CD8-positive, alpha-beta T cell (primary cell): ENCODE measurements at regions of chr1 and their contacts with region 1.

Region 1: GRCh38 chr1:172443626-172444453 is at the start of gene PIGC:
- DNase-seq: peak; percentile 83 to 94 (median 93)
- ATAC-seq: peak; percentile 99
- H3K4me3 ChIP-seq: peak within 1 kb of the TSS; percentile 78 to 90
- H3K4me3 Mint-ChIP-seq: peak within 1 kb of the TSS; percentile 96
- H3K27ac ChIP-seq: peak within 1 kb of the TSS; percentile 71 to 83
- H3K27ac Mint-ChIP-seq: peak within 1 kb of the TSS; percentile 95
- H3K4me1 ChIP-seq: peaks cover 25% of the 10 kb centered on the region
- H3K4me1 Mint-ChIP-seq: peaks cover 45% of the 10 kb centered on the region
- H3K27me3 ChIP-seq: no peaks in the 10 kb centered on the region
- H3K27me3 Mint-ChIP-seq: no peaks in the 10 kb centered on the region
- CTCF ChIP-seq: peak; percentile 77
- total RNA-seq, gene PIGC: 22.1 to 23.2 TPM

Region 2: DNA sequence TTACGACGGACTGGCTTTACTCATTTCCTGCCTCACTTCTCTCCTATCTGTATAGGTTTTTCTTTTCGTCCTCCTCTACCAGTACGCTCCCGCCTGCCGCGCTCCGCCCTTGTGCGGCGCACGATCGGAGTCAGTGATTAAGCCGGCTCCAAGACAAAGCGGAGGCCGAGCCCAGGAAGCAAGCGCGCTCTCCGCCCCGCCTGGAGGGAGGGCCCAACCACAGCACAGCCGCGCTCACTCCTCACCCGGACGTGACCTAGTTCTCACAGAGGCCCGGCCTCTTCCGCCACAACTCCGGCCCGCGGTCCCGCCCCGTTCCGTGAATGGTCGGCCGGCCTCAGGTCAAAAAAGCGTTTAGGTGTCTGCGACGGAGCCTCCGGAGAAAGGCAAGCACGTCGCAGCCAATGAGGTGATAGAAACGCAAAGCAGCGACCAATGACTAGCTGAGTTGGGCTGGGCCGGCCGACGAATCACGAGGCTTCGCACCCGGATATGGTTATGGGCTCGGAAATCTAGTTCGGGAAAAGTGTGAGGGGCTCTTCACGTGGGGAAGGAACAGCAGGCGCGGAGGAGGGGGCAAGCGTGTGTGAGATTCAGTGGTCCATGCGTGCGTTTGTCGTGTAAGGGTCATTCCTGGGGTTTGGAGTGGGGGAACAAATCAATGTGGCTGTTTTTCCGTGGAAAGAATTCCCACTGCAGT is 662.5 kb before region 1 on chr1 and contains the start of gene METTL13:
- CTCF ChIA-PET with region 1: no interaction called
- POLR2A ChIA-PET with region 1: no interaction called
- intact Hi-C with region 1: loop called (anchors 5 to 10 kb)
- DNase-seq: peak; percentile 96 to 99 (median 98)
- ATAC-seq: peak; percentile 90
- H3K4me3 ChIP-seq: peak within 1 kb of the TSS; percentile 89 to 92
- H3K4me3 Mint-ChIP-seq: peak within 1 kb of the TSS; percentile 95
- H3K27ac ChIP-seq: peak within 1 kb of the TSS; percentile 75 to 89
- H3K27ac Mint-ChIP-seq: peak within 1 kb of the TSS; percentile 96
- H3K4me1 ChIP-seq: peaks cover 33% of the 10 kb centered on the region
- H3K4me1 Mint-ChIP-seq: peaks cover 54% of the 10 kb centered on the region
- H3K27me3 ChIP-seq: no peaks in the 10 kb centered on the region
- H3K27me3 Mint-ChIP-seq: no peaks in the 10 kb centered on the region
- CTCF ChIP-seq: no peak
- total RNA-seq, gene METTL13: 6.6 to 6.9 TPM

Region 3: GRCh38 chr1:171841050-171841940 is 602.5 kb before region 1 on chr1 and contains the start of gene DNM3:
- CTCF ChIA-PET with region 1: no interaction called
- POLR2A ChIA-PET with region 1: no interaction called
- intact Hi-C with region 1: loop called in 1 of 2 experiments (anchors 1 kb)
- DNase-seq: peak; percentile 51 to 89 (median 77)
- ATAC-seq: peak; percentile 94
- H3K4me3 ChIP-seq: peak within 1 kb of the TSS; percentile 75 to 80
- H3K4me3 Mint-ChIP-seq: peak within 1 kb of the TSS; percentile 87
- H3K27ac ChIP-seq: no peak within 1 kb of the TSS
- H3K27ac Mint-ChIP-seq: peak within 1 kb of the TSS; percentile 16
- H3K4me1 ChIP-seq: peaks cover 9% of the 10 kb centered on the region
- H3K4me1 Mint-ChIP-seq: peaks cover 14% of the 10 kb centered on the region
- H3K27me3 ChIP-seq: peaks cover 4 to 9% of the 10 kb centered on the region in 2 experiments
- H3K27me3 Mint-ChIP-seq: peaks cover 16% of the 10 kb centered on the region
- CTCF ChIP-seq: no peak
- total RNA-seq, gene DNM3: 0.72 to 1.1 TPM

Region 4: GRCh38 chr1:172089768-172090510 is 353.9 kb before region 1 on chr1:
- CTCF ChIA-PET with region 1: interaction called, 4 read pairs
- POLR2A ChIA-PET with region 1: no interaction called
- intact Hi-C with region 1: loop called (anchors 1 kb)
- DNase-seq: peak; percentile 13 to 74 (median 54)
- ATAC-seq: peak; percentile 84
- H3K4me3 ChIP-seq: no peak overlapping the region
- H3K4me3 Mint-ChIP-seq: no peak overlapping the region
- H3K27ac ChIP-seq: no peak overlapping the region
- H3K27ac Mint-ChIP-seq: no peak overlapping the region
- H3K4me1 ChIP-seq: peaks cover 4% of the 10 kb centered on the region
- H3K4me1 Mint-ChIP-seq: peaks cover 4% of the 10 kb centered on the region
- H3K27me3 ChIP-seq: no peaks in the 10 kb centered on the region
- H3K27me3 Mint-ChIP-seq: no peaks in the 10 kb centered on the region
- CTCF ChIP-seq: peak; percentile 66

Region 5: DNA sequence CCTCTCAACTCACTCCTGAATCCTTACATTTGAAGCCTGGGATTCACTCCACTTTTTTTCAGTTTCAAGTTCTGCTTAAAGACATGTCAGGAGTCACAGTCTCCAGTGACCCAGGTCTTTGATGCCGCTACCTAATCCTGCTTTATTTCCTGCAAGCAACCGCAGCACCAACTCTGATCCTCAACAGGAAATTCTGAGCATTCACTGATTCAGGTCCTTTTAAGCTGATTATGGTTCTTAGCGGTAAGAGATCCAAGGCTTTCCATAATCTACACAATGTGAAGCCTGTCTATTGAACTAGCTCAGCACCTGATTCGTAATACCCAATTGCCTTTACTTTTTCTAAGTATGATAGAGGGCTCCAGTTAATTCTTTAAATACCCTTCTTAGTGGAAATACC is 43.7 kb after region 1 on chr1:
- CTCF ChIA-PET with region 1: no interaction called
- POLR2A ChIA-PET with region 1: no interaction called
- intact Hi-C with region 1: no loop called
- DNase-seq: no peak
- ATAC-seq: no peak
- H3K4me3 ChIP-seq: no peak overlapping the region
- H3K4me3 Mint-ChIP-seq: no peak overlapping the region
- H3K27ac ChIP-seq: no peak overlapping the region
- H3K27ac Mint-ChIP-seq: no peak overlapping the region
- H3K4me1 ChIP-seq: peaks cover 8% of the 10 kb centered on the region
- H3K4me1 Mint-ChIP-seq: peaks cover 8% of the 10 kb centered on the region
- H3K27me3 ChIP-seq: no peaks in the 10 kb centered on the region
- H3K27me3 Mint-ChIP-seq: peaks cover 11% of the 10 kb centered on the region
- CTCF ChIP-seq: no peak

Region 6: DNA sequence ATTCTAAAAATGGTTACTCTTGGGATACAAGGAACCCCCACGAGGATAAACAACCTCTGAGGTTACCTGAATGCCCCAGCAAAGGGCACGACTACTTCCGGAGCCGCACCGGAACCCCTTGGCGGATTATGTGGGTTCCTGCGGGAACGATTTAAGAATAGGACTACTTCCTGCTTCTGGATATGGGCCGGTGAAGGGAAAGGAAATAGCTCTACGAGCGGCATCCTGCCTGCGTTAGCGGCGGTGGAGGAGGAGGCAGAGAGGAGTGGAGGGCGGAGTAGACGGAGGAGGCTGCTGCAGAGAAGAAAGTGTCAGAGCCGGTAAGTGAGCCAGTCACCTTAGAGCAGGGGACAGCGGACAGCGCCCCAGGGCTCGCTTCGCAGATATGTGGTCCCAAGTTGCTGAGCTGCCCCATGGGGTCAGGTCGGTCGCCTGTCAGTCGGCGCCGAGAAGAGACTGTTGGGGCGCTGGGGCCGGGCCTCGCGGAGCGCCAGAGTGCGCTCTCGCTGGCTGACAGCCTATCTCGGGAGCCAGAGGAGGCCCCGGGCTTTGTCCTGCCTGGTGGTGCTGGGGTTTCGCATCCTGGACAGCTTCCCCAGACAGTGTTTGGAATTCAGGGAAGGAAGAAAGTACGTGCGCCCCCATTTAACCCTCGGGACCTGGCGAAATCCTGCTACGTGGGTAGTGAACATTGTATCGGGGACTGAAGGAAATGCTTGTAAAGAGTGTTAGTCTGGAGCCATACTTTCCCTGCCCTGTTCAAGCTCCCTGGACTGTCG is 1271.1 kb after region 1 on chr1 and contains the start of gene KLHL20:
- CTCF ChIA-PET with region 1: no interaction called
- POLR2A ChIA-PET with region 1: no interaction called
- intact Hi-C with region 1: loop called in 1 of 2 experiments (anchors 10 kb)
- DNase-seq: peak; percentile 72 to 94 (median 83)
- ATAC-seq: peak; percentile 98
- H3K4me3 ChIP-seq: peak within 1 kb of the TSS; percentile 80 to 86
- H3K4me3 Mint-ChIP-seq: peak within 1 kb of the TSS; percentile 96
- H3K27ac ChIP-seq: peak within 1 kb of the TSS; percentile 76 to 87
- H3K27ac Mint-ChIP-seq: peak within 1 kb of the TSS; percentile 97
- H3K4me1 ChIP-seq: peaks cover 24% of the 10 kb centered on the region
- H3K4me1 Mint-ChIP-seq: peaks cover 38% of the 10 kb centered on the region
- H3K27me3 ChIP-seq: peaks cover 0 to 2% of the 10 kb centered on the region in 2 experiments
- H3K27me3 Mint-ChIP-seq: peaks cover 7% of the 10 kb centered on the region
- CTCF ChIP-seq: no peak
- total RNA-seq, gene KLHL20: 27.9 to 29.0 TPM